ENCODE measurements at regions of chr17 and their contacts with region 1.

Region 1: DNA sequence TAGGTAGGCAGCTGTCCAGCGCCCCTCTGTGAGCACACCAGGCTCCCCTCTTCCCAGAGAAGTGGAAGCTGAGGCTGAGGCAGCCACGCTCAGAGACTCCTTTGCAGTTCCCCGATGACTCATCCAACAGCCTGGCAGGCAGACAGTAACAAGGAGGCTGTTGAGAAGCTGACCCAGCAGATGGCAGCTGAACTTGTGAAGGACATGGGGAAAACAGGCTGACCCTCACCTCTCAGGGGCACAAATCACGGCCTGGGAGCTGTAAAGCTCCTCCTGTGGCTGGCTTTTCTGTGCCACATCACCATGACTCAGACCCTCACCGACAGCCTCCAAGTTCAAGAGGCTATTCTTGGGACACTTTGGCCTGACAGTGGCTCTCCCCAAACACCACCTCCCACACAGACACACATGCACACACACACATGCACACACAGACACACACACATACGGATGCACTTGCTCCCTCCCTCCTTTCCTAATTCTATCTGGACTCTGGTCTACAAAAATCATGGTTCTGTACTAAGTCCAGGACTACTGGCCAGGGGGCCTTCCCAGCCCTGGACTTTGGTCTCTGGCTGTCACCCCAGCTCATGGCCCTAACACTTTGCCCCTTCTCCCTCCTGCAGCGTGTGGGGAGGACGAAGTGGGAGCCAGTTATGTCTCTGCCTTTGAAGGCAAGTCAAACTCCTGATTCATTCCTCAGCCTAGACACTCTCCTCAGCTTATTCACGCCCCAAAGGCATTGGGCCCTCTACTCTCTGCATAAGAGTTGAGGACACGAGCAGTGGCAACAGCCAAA is 23.2 kb downstream of the MAP3K14 start:
- DNase-seq: peak; percentile 60
- H3K4me3 Mint-ChIP-seq: no peak overlapping the region
- H3K27ac Mint-ChIP-seq: peak overlapping the region; percentile 68
- H3K4me1 Mint-ChIP-seq: peaks cover 57% of the 10 kb centered on the region
- H3K27me3 Mint-ChIP-seq: no peaks in the 10 kb centered on the region

Region 2: DNA sequence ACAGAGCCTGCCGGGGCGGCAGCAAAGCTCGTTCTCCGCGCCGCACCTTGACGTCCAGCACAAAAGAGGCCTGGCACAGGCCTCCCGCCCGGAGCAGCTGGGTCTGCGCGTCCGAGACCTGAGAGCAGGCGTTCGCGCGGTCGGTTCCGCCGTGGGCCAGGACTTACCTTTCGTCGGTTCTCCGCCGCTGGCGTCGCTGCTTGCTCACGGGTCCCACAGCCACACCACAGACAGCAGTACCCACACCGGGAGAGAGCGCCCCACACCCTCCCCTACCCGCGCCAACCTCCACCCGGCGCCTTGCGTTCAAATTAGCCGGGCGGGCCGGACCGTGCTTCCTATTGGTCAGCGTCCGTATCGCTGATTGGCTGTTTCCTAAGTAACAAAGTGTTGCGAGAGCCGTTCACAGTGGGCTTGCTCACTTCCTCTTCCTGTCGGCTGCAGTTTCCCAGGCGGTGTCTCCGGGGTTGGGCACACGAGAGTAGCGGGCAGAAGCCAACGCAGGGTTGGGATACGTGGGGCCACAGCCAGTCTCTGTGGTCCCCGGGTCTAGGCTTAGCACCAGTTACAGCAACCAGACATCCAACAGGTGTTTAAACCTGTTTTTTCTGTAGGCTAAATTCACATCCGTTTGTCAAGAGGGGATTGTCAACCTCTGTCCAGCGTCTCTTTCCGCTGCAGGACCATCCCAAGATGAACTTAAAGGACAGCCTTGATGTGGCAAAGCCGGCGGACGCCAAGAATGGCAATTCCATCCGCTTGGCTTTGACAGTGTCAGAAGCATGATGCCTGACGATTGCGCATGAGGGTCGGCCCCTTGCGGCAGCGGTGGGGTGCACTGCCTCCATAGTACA is 345.9 kb before region 1 on chr17 and contains the start of gene KIF18B:
- CTCF ChIA-PET with region 1: no interaction called
- intact Hi-C with region 1: no loop called
- DNase-seq: peak; percentile 97
- H3K4me3 Mint-ChIP-seq: peak within 1 kb of the TSS; percentile 84
- H3K27ac Mint-ChIP-seq: peak within 1 kb of the TSS; percentile 74
- H3K4me1 Mint-ChIP-seq: peaks cover 7% of the 10 kb centered on the region
- H3K27me3 Mint-ChIP-seq: peaks cover 5% of the 10 kb centered on the region
- total RNA-seq, gene KIF18B: 54.9 to 55.4 TPM

Region 3: DNA sequence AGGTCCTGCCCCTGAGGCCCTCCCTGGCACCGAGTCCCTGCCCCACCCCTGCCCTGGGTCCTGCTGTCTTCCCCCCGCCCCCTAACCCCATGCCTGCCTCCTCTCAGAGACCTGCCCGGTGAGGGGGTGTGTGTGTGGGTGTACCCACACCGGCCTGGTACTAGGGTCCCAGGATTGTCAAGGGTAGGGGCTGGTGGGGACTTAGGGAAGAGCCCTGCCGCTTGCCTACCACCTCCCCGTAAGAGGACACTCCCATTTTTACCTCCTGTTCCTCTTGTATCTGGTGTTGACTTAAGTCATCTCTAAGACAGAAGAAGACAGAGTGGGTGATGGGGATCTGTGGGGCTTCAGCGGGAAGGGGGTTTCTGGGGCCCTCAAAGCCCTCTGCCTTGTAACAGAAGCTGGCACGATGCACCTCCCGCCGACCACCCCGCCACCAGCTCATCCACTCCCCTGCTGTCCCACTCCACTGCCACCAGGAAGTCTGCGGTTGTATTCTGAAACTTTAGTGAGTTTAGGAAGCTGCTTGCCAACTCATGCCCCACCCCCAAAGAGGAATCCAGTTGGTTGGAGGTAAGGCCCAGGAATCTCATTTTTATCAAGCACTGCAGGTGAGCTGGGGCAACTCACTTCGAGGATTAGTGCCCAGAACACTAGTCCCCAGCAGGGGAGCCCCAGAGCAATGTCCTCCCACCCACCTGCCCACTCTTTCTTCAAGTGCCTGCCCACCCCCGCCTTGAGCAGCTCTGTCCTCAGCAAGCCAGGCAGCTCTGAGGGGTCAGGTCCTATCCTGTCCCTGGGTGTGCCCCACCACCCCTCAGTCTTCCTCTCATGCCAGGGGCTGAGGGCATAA is 37.3 kb before region 1 on chr17:
- CTCF ChIA-PET with region 1: no interaction called
- intact Hi-C with region 1: no loop called
- DNase-seq: no peak
- H3K4me3 Mint-ChIP-seq: no peak overlapping the region
- H3K27ac Mint-ChIP-seq: no peak overlapping the region
- H3K4me1 Mint-ChIP-seq: peaks cover 51% of the 10 kb centered on the region
- H3K27me3 Mint-ChIP-seq: no peaks in the 10 kb centered on the region

Region 4: GRCh38 chr17:45364531-45365390 is 71.1 kb after region 1 on chr17:
- CTCF ChIA-PET with region 1: interaction called, 10 read pairs
- intact Hi-C with region 1: no loop called
- DNase-seq: peak; percentile 1
- H3K4me3 Mint-ChIP-seq: no peak overlapping the region
- H3K27ac Mint-ChIP-seq: no peak overlapping the region
- H3K4me1 Mint-ChIP-seq: no peaks in the 10 kb centered on the region
- H3K27me3 Mint-ChIP-seq: peaks cover 7% of the 10 kb centered on the region

Region 5: DNA sequence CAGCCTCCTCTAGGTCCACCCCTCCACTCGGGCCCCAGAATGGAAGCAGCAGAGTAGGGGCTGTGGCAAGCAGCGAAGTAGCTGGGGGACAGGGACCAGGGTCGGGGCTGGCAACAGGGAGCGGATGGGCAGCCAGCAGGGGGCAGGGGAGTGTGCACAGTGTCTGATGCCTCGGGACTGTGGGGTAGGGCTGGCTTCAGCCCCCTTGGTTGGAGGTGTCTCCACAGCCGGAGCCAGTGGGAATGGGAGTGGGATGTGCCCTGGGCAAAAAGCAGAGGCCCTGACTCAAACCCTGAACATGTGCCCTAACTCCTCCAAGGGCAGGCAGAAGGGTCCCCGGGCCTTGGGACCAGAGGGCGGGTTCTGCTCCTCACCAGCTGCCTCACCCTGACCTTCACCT is 157.5 kb after region 1 on chr17:
- CTCF ChIA-PET with region 1: no interaction called
- intact Hi-C with region 1: no loop called
- DNase-seq: no peak
- H3K4me3 Mint-ChIP-seq: no peak overlapping the region
- H3K27ac Mint-ChIP-seq: no peak overlapping the region
- H3K4me1 Mint-ChIP-seq: peaks cover 3% of the 10 kb centered on the region
- H3K27me3 Mint-ChIP-seq: no peaks in the 10 kb centered on the region

Measured in activated naive CD4-positive, alpha-beta T cell treated with anti-CD3 and anti-CD28 coated beads for 36 hours (primary cell).